ENCODE measurements at regions of chr13 and their contacts with region 1.

Region 1: DNA sequence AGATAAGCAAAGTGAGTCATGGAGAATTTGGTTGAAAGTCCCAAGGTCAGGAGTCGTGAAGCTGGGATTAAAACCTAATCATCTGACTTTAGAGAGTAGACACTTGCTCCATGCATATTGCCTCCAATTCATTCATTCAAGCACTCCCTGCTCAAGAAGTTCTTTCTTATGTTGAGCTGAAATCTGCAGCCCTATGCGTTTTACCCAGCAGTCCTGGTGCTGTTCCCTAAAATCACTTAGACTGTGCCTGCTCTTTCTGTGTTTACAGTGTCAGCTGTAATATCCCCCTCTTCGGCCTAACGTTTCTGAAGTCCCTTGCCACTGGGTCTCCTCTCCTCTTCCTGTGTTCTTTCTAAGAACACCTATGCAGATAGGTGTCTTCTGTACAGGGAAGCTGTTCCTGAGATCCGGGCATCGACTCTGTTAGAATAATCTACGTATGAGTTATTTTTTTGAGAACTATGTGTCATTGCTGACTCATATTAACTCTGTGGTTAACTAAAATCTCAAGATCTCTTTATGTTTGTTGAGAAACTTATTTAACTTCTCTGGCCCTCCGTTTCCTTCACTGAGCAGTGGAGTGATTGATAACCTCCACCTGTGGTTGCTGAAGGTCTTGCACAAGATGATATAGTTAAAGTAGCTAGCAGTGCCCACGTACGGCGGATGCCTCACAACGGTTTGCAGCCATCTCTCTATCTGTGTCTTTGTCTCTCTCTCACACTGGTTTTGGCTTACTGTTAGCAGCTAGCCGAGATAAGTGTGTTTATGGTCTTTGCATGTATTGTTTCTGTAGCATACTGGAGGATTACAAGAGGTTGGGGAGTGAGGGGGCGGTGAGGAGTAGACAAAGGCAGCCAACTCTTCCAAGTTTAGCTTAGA is 4.7 kb downstream of the ALOX5AP start:
- DNase-seq: peak; percentile 68
- H3K4me3 Mint-ChIP-seq: peak overlapping the region; percentile 83
- H3K27ac Mint-ChIP-seq: peak overlapping the region; percentile 95
- H3K4me1 Mint-ChIP-seq: peaks cover 81% of the 10 kb centered on the region
- H3K27me3 Mint-ChIP-seq: peaks cover 2% of the 10 kb centered on the region

Region 2: GRCh38 chr13:30158774-30159445 is 581.1 kb before region 1 on chr13:
- intact Hi-C with region 1: loop called (anchors 1 kb)
- DNase-seq: no peak
- H3K4me3 Mint-ChIP-seq: peak overlapping the region; percentile 23
- H3K27ac Mint-ChIP-seq: peak overlapping the region; percentile 78
- H3K4me1 Mint-ChIP-seq: peaks cover 43% of the 10 kb centered on the region
- H3K27me3 Mint-ChIP-seq: peaks cover under 1% of the 10 kb centered on the region

Region 3: DNA sequence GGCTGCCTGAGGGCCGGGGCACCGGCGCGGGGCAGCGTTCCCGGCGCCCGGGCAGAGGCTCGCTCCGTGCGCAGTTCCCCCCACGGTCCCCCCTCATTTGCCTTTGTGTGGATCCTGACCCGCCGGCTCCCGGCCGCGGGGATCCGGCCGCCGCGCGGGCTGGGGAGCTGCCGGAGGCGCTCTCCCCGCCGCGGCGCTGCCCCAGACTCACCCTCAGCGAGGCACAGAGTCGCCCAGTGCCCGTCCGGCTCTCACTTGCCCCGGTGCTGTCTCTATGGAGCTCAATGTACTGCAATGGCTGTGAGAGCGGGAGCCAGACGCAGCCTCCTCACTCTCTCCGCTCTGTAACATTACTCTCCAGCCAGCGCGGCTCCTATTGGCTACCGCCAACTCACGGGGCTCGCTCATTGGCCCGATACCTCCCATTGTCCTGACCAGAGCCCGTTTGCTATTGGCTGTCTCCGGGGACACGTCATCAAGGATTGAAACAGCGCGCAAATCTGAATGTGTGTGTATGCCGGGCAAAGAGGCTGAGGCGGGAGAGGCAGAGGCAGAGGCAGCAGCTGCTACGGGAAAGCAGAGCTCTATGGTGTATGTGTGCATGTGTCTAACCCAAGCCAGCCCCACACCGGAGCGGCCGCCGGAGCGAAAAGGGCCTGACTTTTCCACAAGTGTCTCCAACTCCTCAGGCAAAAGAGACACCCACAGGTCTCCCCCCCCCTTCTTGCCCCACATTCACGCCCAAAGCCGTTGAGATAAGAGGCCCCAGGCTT is 274.2 kb before region 1 on chr13 and contains the start of gene HMGB1:
- intact Hi-C with region 1: loop called (anchors 1 kb)
- DNase-seq: peak; percentile 97
- H3K4me3 Mint-ChIP-seq: peak within 1 kb of the TSS; percentile 94
- H3K27ac Mint-ChIP-seq: peak within 1 kb of the TSS; percentile 100
- H3K4me1 Mint-ChIP-seq: peaks cover 28% of the 10 kb centered on the region
- H3K27me3 Mint-ChIP-seq: no peaks in the 10 kb centered on the region
- total RNA-seq, gene HMGB1: 593 and 606 TPM in 2 replicates

Region 4: DNA sequence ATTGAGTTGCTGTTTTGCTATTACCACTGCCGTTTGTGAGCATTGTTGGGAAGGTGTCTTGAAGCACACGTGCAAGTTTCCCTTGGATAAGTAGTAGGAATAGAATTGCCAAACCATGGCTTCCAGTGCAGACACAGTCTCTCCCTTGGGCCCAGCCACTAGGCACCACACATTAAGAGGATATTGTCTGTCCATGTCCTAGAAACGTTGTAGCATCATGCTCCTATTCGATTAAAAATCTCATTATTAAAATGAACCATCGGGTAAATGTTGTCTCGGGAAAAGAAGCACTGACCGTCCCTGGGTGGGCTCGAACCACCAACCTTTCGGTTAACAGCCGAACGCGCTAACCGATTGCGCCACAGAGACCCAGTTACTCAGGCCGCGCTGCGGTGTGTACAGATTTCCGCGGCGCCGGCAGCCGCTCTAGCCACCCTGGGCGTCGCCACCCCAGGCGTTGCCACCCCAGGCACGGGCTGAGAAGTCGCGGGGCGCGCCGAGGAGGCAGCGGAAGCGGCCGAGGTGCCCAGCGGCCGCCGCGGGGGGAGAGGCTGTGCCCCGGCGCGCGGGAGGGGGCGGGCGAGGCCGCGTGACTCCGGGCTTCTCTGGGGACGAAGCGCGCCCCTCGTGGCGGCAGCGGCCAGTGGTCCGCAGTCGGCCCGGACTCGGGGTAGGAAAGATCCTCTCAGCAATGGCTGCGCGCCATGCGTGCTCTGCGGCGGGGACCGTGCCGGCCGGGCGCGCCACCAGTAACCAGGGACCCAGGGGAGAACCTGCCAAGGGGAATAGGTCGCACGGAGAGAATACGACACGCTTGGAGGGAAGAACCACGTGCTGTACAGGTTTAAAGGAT is 66.1 kb before region 1 on chr13:
- intact Hi-C with region 1: loop called (anchors 1 kb)
- DNase-seq: peak; percentile 80
- H3K4me3 Mint-ChIP-seq: peak overlapping the region; percentile 85
- H3K27ac Mint-ChIP-seq: peak overlapping the region; percentile 84
- H3K4me1 Mint-ChIP-seq: peaks cover 28% of the 10 kb centered on the region
- H3K27me3 Mint-ChIP-seq: peaks cover 22% of the 10 kb centered on the region

Region 5: GRCh38 chr13:30774214-30774730 is 34.3 kb after region 1 on chr13:
- intact Hi-C with region 1: loop called (anchors 1 kb)
- DNase-seq: peak; percentile 12
- H3K4me3 Mint-ChIP-seq: peak overlapping the region; percentile 32
- H3K27ac Mint-ChIP-seq: peak overlapping the region; percentile 64
- H3K4me1 Mint-ChIP-seq: peaks cover 26% of the 10 kb centered on the region
- H3K27me3 Mint-ChIP-seq: no peaks in the 10 kb centered on the region

Region 6: GRCh38 chr13:31161828-31162590 is 422.0 kb after region 1 on chr13 and contains the start of gene HSPH1:
- intact Hi-C with region 1: loop called (anchors 2 kb)
- DNase-seq: peak; percentile 99
- H3K4me3 Mint-ChIP-seq: peak within 1 kb of the TSS; percentile 98
- H3K27ac Mint-ChIP-seq: peak within 1 kb of the TSS; percentile 96
- H3K4me1 Mint-ChIP-seq: peaks cover 44% of the 10 kb centered on the region
- H3K27me3 Mint-ChIP-seq: no peaks in the 10 kb centered on the region
- total RNA-seq, gene HSPH1: 310 and 326 TPM in 2 replicates

Measured in activated T-helper 1 cell treated with anti-CD3 and anti-CD28 coated beads, Interleukin-12 subunit alpha, Interleukin-12 subunit beta, Interleukin-2, Interleukin-4 antibody, amounts not matched to agents 30 ng/mL and 10 ng/mL and 1 ng/mL, durations not matched to agents 14 hours and 24 hours and 36 hours (primary cell).